ENCODE measurements at regions of chr10 and their contacts with region 1.

Region 1: GRCh38 chr10:71727738-71728737 is 8.5 kb upstream of the C10orf105 start:
- DNase-seq: peak; percentile 79 to 95
- H3K4me3 ChIP-seq: no peak overlapping the region
- CTCF ChIP-seq: no peak
- POLR2A ChIP-seq: no peak

Region 2: GRCh38 chr10:71771821-71772617 is 44.0 kb after region 1 on chr10:
- intact Hi-C with region 1: loop called (anchors 10 kb)
- DNase-seq: peak; percentile 72 to 94
- H3K4me3 ChIP-seq: peak overlapping the region; percentile 61
- CTCF ChIP-seq: no peak
- POLR2A ChIP-seq: no peak